Sigmoid colon (tissue), 7 donors: ENCODE measurements at regions of chr15 and their contacts with region 1.

Region 1: DNA sequence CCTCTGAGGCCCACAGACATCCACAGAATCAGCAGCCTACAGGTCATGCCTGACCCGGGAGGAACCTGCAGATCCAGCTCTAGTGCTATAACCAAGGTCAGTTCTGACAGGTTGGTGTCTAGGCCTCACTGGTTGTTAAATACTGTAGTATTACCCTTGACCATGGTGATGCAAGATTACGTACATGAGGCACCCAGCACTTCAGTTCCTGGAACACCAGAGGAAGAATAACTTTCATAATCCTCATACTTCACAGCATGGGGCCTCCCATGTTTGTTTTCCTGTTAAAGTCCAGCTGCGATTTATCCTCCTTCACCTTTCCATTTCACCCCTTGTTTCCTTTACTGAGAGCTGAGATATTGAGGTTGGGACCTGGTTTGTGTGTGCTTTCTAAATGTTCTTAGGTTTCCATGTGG is 34.4 kb upstream of the GLCE start:
- DNase-seq: no peak
- H3K4me3 ChIP-seq: no peak overlapping the region
- H3K27ac ChIP-seq: no peak overlapping the region
- H3K4me1 ChIP-seq: peaks cover 0 to 10% (median 0%) of the 10 kb centered on the region in 4 donors
- H3K27me3 ChIP-seq: no peaks in the 10 kb centered on the region
- CTCF ChIP-seq: no peak
- EP300 ChIP-seq: no peak
- POLR2A ChIP-seq: no peak

Region 2: GRCh38 chr15:69225355-69226025 is 99.4 kb after region 1 on chr15:
- intact Hi-C with region 1: loop called (anchors 10 kb)
- DNase-seq: no peak
- H3K4me3 ChIP-seq: no peak overlapping the region
- H3K27ac ChIP-seq: no peak overlapping the region
- H3K4me1 ChIP-seq: no peaks in the 10 kb centered on the region
- H3K27me3 ChIP-seq: no peaks in the 10 kb centered on the region
- CTCF ChIP-seq: no peak
- EP300 ChIP-seq: no peak
- POLR2A ChIP-seq: no peak

Region 3: GRCh38 chr15:69410290-69410874 is 284.3 kb after region 1 on chr15:
- intact Hi-C with region 1: no loop called
- DNase-seq: no peak
- H3K4me3 ChIP-seq: no peak overlapping the region
- H3K27ac ChIP-seq: no peak overlapping the region
- H3K4me1 ChIP-seq: peaks cover 0 to 27% (median 9%) of the 10 kb centered on the region in 4 donors
- H3K27me3 ChIP-seq: no peaks in the 10 kb centered on the region
- CTCF ChIP-seq: no peak
- EP300 ChIP-seq: no peak
- POLR2A ChIP-seq: no peak